ENCODE measurements at regions of chr11 and their contacts with region 1.

Region 1: GRCh38 chr11:48307760-48308386 is 1.9 kb downstream of the OR4S1 start:
- DNase-seq: peak; percentile 40
- ATAC-seq: peak; percentile 50 to 60

Region 2: DNA sequence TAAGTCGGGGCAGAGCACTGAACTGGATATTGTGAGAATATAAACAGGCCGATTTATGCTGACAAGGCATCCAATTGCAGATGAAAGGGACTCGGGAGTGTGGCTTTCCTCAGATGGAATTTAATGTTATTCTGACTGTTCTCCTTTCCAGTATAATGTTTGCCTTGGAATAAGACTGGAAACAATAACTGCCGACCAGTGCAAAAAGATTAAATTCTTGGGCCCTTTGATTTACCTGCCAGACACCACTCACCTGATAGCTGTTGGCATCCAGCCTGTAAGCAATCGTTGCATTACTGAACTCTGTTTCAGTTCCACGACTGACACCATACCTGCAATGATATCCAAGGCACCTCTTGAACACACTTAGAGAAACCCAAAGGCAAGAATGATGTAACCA is 470.6 kb before region 1 on chr11:
- intact Hi-C with region 1: no loop called
- DNase-seq: no peak
- ATAC-seq: no peak

Region 3: DNA sequence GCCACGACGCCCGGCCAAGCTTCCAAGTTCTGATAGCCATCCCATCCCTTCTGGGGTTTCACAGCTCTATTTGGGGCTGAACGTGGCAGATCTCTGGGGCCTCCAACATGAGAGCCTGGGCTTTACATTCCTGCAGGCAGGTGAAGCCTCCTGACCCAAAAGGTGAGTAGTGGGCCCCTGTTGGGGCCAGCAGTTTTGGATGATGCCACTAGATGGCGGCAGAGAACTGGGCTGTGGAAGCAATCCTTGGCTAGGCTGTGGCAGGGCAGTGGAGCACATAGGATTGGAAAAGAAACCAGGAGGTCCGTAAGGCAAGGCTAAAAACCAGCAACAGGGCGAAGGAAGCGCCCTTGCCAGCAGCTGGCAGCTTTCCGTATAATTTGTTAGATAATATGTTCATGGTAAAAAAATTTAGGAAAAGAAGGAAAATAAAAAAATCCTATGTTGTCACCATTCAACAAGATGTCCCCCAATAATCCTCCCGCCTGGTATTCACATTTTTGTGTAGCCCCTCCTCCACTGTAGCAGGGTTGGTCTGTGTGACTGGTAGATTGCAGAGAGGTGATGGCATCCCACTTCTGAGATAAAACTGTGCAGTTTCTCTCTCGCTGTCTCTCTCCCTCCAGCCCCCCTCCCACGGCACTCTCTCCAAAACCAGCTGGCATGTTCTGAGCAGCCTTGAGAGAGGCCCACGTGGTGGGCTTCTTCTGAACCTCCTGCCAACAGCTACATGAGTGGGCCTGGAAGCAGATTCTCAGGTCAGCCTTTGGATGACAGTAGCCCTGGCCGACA is 134.9 kb before region 1 on chr11:
- intact Hi-C with region 1: loop called in 1 of 2 experiments (anchors 10 kb)
- DNase-seq: peak; percentile 57
- ATAC-seq: peak; percentile 77 to 80

Region 4: DNA sequence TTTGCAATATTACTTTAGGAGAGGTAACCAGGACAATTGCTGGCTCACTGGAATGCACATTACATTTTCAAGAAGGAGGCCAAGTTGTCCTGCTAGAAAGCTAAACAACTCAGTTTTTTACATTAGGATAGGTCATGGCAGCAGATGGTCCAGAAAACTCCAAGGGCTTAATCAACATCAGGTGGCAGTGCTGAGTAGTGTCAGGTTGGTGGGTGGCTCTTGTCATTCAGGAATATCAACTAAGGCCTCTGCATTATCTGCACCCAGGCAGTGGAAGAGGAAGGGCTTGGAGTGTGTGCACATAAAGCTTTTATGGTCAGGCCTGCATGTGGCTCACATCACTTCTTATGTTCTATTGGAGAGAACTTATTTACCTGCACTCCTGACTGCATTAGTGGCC is 123.4 kb before region 1 on chr11:
- intact Hi-C with region 1: loop called (anchors 10 kb)
- DNase-seq: no peak
- ATAC-seq: no peak

Region 5: DNA sequence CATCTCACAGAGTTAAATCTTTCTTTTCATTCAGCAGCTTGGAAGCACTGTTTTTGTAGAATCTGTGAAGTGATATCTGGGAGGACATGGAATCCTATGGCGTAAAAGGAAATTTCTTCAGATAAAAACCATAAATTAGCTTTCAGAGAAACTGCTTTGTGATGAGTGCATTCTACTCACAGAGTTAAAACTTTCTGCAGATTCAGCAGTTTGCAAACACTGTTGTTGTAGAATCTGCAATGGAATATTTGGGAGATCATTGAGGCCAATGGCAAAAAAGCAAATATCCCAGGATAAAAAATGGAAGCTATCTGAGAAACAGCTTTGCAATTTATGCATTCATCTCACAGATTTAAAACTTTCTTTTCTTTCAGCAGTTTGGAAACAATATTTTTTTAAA is 361.3 kb after region 1 on chr11:
- intact Hi-C with region 1: no loop called
- DNase-seq: no peak
- ATAC-seq: no peak

Region 6: DNA sequence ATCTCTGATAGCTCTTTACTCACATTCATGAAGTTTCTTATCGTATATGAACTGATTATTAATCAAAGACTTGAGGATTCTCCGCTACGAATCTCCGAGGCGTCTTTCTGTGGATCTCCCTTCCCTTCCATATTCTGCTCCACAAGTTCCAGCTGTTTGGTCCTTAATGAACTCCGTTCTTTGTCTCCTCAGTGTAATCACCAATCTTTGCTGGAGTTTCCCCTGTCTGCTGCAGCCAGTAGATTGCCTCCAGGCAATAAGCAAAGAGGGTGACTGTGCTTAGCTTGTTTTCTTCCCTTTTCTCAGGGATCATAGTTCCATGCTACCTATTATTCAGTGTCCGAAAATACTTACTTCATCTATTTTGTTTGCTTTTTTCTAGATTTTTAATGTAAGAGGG is 1070.1 kb after region 1 on chr11:
- intact Hi-C with region 1: no loop called
- DNase-seq: no peak
- ATAC-seq: no peak

Measured in left cardiac atrium (tissue), 4 donors.